IMR-90 (cell line): ENCODE measurements at regions of chr9 and their contacts with region 1.

Region 1: GRCh38 chr9:112180387-112180881 is 5.3 kb upstream of the SUSD1 start:
- DNase-seq: no peak
- ATAC-seq: peak; percentile 34; the same call in 1 of the 2 replicates
- H3K4me3 ChIP-seq: no peak overlapping the region
- H3K27ac ChIP-seq: no peak overlapping the region
- H3K4me1 ChIP-seq: peaks cover 4% of the 10 kb centered on the region
- H3K27me3 ChIP-seq: peaks cover 4% of the 10 kb centered on the region; the same call in 1 of the 2 replicates
- CTCF ChIP-seq: no peak
- POLR2A ChIP-seq: no peak
- RAD21 ChIP-seq: no peak

Region 2: DNA sequence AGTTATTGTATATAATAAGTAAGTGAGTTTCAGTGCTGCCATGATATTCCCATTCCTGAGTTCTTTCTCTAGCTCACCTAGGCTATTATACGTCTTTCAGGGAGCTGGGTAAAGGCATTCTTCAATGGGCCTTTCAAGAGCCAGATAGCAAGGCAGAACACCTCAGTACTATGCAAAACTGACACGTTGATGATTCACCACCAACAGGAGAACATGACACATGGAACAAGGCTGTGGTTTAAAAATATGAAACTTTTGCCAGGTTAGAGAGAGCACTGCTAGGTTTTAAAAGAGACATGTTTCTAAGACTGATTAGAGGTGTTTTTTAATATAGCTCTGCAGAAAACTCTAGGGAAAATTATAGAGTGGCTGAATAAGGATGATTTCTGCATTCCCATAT is 187.9 kb before region 1 on chr9:
- CTCF ChIA-PET with region 1: no interaction called
- POLR2A ChIA-PET with region 1: no interaction called
- dilution Hi-C with region 1: no loop called
- in situ Hi-C with region 1: no loop called
- intact Hi-C with region 1: no loop called
- DNase-seq: peak; percentile 82
- ATAC-seq: peak; percentile 64
- H3K4me3 ChIP-seq: no peak overlapping the region
- H3K27ac ChIP-seq: no peak overlapping the region
- H3K4me1 ChIP-seq: peaks cover 3% of the 10 kb centered on the region; the same call in 1 of the 2 replicates
- H3K27me3 ChIP-seq: no peaks in the 10 kb centered on the region
- CTCF ChIP-seq: no peak
- POLR2A ChIP-seq: no peak
- RAD21 ChIP-seq: no peak

Region 3: DNA sequence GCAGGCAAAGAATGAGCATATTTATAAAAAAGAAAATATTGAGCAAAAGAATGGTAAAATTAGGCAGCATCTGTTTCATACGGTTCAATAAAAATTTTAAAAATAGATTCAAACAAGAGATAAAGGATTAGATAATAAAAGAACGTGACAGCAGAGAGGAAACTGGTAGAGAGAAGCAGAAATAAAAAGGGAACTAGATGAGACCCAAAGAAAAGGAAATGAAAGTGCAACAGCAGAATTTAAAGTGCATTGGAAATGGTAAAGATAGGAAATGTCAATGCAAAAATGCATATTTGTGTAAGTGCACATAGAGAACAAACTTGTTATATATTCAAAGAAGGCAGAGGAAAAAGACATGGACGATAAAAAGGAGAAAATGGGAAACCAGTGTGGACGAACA is 75.5 kb before region 1 on chr9:
- CTCF ChIA-PET with region 1: no interaction called
- POLR2A ChIA-PET with region 1: no interaction called
- dilution Hi-C with region 1: no loop called
- in situ Hi-C with region 1: no loop called
- intact Hi-C with region 1: loop called (anchors 10 kb)
- DNase-seq: no peak
- ATAC-seq: no peak
- H3K4me3 ChIP-seq: no peak overlapping the region
- H3K27ac ChIP-seq: no peak overlapping the region
- H3K4me1 ChIP-seq: no peaks in the 10 kb centered on the region
- H3K27me3 ChIP-seq: no peaks in the 10 kb centered on the region
- CTCF ChIP-seq: no peak
- POLR2A ChIP-seq: no peak
- RAD21 ChIP-seq: no peak